Heart right ventricle (tissue), 16 donors: ENCODE measurements at regions of chr1 and their contacts with region 1.

Region 1: DNA sequence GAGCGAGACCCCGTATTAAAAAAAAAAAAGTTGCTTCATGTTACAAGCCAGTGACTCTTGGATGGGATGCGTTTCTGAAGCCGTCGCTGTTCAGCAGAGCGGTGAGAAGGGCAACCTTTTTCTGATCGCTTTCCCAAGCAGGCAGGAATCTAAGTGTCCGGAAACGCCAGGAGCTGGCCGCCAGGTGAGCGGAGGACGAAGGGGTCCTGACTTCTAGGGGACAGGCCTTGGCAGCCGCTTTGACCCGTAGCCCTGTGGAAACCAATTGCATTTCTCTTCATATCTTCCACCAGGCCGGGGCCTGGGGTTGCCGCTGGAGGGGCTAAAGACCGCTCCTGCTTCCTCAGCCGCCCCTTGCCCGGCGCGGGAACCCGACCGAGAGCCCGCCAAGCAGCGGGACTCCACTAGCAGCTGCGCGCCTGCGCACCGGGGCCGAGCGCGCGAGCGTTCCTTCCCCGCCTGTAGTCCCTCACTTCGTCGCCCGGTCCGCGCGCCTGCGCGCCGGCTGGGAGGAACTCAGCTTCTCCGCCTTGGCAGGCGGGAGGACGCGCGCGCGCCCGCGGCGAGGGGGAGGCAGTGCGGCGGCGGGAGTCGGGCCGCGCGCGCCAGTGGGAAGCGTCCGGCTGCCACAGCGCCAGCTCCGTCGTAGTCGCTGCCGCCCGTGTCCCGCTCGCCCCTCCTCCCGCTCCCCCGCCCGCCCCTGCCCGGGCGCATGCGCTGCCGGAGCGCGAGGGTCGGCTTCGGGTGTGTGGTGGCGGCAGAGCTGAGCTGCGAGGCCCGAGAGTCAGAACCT is at the start of gene SPEN:
- DNase-seq: peak; percentile 97 to 100
- ATAC-seq: peak; percentile 86 to 95 (median 94)
- H3K4me3 ChIP-seq: peak within 1 kb of the TSS; percentile 68 to 95 (median 88)
- H3K27ac ChIP-seq: peak within 1 kb of the TSS; percentile 91 to 99 (median 96)
- H3K4me1 ChIP-seq: peaks cover 4 to 64% (median 48%) of the 10 kb centered on the region in 9 donors
- H3K27me3 ChIP-seq: no peaks in the 10 kb centered on the region
- CTCF ChIP-seq: peak in 1 of 9 donors; percentile 6
- total RNA-seq, gene SPEN: 24.1 to 34.4 (median 28.1) TPM

Region 2: DNA sequence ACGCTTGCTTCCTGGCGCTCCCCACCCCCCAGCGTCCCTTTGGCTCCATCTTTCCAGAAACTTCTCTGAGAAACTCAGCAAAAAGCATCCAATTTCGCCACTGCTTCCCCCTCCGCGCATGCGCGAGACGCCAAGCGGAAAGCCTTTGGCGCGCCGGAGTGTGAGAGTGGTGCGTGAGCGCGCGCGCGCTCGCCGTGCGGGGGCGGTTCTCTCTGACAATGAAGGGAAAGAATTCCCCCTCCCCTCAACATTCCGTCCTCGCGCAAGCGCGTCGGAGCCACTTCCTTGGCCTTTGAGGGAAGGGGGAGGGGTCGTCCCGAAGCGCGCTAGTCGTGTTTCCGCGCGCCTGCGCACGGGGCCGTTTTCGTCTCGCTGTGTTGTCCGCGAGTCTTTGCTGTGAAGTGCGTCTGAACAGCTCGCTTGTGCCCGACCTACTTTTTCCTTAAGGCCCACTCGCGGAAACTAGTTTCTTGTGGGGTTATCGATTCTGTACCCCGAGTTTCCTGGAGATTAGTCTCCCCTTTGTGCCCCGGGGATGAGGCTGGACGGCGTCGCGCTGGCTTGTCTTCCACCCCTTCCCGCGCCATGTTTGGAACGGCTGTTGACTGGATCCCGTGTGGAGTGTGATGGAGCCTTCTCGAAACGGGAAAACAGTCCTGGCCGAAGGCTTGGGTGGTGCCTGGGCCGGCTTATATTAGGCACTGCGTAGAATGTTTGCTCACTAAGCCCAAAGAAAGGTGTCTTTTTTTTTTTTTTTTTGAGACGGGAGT is 11.4 kb before region 1 on chr1:
- intact Hi-C with region 1: loop called in 6 of 10 experiments (anchors 1 to 2 kb)
- DNase-seq: peak; percentile 100
- ATAC-seq: peak; percentile 85 to 95 (median 92)
- H3K4me3 ChIP-seq: peak overlapping the region; percentile 67 to 91 (median 87)
- H3K27ac ChIP-seq: peak overlapping the region; percentile 97 to 100 (median 100)
- H3K4me1 ChIP-seq: peaks cover 3 to 45% (median 21%) of the 10 kb centered on the region in 9 donors
- H3K27me3 ChIP-seq: no peaks in the 10 kb centered on the region
- CTCF ChIP-seq: no peak

Region 3: GRCh38 chr1:15885701-15886610 is 38.7 kb after region 1 on chr1:
- intact Hi-C with region 1: loop called in 6 of 10 experiments (anchors 2 to 5 kb)
- DNase-seq: peak; percentile 96 to 97
- ATAC-seq: peak; percentile 98 to 99 (median 98)
- H3K4me3 ChIP-seq: peak overlapping the region in 9 of 10 donors; percentile 8 to 54 (median 42)
- H3K27ac ChIP-seq: peak overlapping the region; percentile 65 to 94 (median 82)
- H3K4me1 ChIP-seq: peaks cover 4 to 82% (median 55%) of the 10 kb centered on the region in 9 donors
- H3K27me3 ChIP-seq: no peaks in the 10 kb centered on the region
- CTCF ChIP-seq: peak in 6 of 9 donors; percentile 6 to 47 (median 28)

Region 4: GRCh38 chr1:15923241-15923640 is 75.9 kb after region 1 on chr1:
- intact Hi-C with region 1: loop called in 1 of 10 experiments (anchors 5 kb)
- DNase-seq: no peak
- ATAC-seq: no peak
- H3K4me3 ChIP-seq: no peak overlapping the region
- H3K27ac ChIP-seq: no peak overlapping the region
- H3K4me1 ChIP-seq: peaks cover 0 to 5% (median 0%) of the 10 kb centered on the region in 9 donors
- H3K27me3 ChIP-seq: no peaks in the 10 kb centered on the region
- CTCF ChIP-seq: no peak